Right lobe of liver (tissue), 6 donors: ENCODE measurements at regions of chr2 and their contacts with region 1.

Region 1: GRCh38 chr2:27779417-27780055 is 8.0 kb downstream of the MRPL33 start:
- DNase-seq: no peak
- ATAC-seq: peak; percentile 22 to 54 (median 26)
- H3K4me3 ChIP-seq: no peak overlapping the region
- H3K27ac ChIP-seq: peak overlapping the region in 1 of 3 donors; percentile 41
- H3K4me1 ChIP-seq: peaks cover 0 to 8% (median 0%) of the 10 kb centered on the region in 4 donors
- H3K27me3 ChIP-seq: no peaks in the 10 kb centered on the region
- CTCF ChIP-seq: no peak
- POLR2A ChIP-seq: no peak

Region 2: DNA sequence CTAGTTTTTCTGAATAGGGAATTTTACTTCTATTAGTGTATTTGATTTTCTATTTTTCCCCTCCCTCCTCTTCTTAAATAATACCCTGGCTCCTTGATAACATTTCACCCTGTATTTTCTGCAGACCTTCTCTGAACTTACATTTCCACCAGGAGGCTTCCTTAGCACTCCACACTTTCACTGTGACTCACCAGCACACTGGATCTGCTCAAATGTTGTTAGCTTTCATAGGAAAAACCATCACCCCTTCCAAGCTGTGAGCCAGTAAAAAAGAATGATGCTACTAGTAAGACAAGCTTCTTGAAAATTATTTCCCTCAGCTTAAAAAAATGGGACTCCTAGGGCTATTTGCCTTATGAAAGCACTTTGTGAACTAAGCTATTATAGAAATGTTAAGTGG is 132.2 kb before region 1 on chr2:
- intact Hi-C with region 1: no loop called
- DNase-seq: no peak
- ATAC-seq: no peak
- H3K4me3 ChIP-seq: no peak overlapping the region
- H3K27ac ChIP-seq: no peak overlapping the region
- H3K4me1 ChIP-seq: no peaks in the 10 kb centered on the region
- H3K27me3 ChIP-seq: no peaks in the 10 kb centered on the region
- CTCF ChIP-seq: no peak
- POLR2A ChIP-seq: no peak

Region 3: DNA sequence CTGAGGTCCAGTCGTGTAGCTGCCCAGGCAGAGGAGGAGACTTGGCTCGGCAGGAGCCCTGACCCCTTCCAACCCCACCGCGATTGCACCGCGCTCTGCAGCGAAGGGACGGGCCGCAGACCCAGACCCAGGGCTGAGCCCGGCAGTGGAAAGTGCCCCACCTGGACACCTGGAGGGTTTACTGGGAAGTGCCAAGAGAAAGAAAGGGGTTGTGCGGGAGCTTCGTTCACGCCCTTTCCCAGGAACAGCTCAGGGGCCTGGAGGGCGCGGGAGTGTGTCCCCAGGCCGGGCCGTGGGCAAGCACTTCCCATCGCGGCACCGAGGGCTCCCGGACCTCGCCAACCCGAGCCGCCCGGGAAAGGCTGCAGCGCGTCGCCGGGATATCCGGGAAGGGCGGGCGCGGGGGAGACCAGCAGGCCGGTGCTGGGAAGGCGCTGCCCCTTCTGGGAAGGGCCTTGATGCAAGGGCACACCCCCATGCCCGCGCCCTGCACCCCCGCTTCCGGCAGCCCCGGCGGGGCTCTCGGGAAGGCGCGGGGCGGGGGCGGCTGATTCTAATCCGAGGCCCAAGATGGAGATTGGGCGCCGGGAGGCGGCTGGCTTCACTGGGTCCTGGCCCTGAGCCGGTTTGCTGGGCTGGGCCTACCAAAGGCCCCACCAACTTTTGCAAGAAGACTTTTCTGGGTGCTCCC is 44.1 kb before region 1 on chr2:
- intact Hi-C with region 1: no loop called
- DNase-seq: peak; percentile 73 to 88 (median 84)
- ATAC-seq: peak; percentile 52 to 78 (median 68)
- H3K4me3 ChIP-seq: peak overlapping the region; percentile 27 to 57 (median 49)
- H3K27ac ChIP-seq: peak overlapping the region; percentile 88 to 98 (median 93)
- H3K4me1 ChIP-seq: peaks cover 2 to 47% (median 14%) of the 10 kb centered on the region in 4 donors
- H3K27me3 ChIP-seq: no peaks in the 10 kb centered on the region
- CTCF ChIP-seq: no peak
- POLR2A ChIP-seq: peak; percentile 88

Region 4: DNA sequence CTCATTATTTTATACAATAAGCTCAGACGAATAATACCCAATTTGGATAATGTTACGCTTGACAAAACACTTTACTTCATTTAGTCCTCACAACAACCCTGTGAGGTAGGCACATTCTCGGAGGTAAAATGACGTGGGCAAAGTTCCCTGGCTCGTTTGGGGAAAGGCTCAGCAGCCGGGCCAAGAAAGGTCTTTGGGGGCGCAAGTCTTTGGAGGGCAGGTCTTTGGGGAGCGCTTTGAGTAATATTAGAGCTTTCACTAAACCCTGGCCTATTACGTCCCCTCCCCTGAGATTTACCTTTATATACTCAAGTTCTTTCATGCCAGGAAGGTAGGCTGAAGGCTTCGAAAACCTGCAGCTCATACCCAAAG is 110.2 kb after region 1 on chr2:
- intact Hi-C with region 1: loop called in 1 of 2 experiments (anchors 10 kb)
- DNase-seq: peak in 2 of 3 donors; percentile 39 to 56
- ATAC-seq: peak; percentile 2 to 21 (median 13)
- H3K4me3 ChIP-seq: peak overlapping the region; percentile 71 to 84 (median 83)
- H3K27ac ChIP-seq: peak overlapping the region; percentile 96 to 98 (median 97)
- H3K4me1 ChIP-seq: peaks cover 0 to 13% (median 4%) of the 10 kb centered on the region in 4 donors
- H3K27me3 ChIP-seq: no peaks in the 10 kb centered on the region
- CTCF ChIP-seq: no peak
- POLR2A ChIP-seq: no peak

Region 5: GRCh38 chr2:27932396-27932795 is 152.9 kb after region 1 on chr2:
- intact Hi-C with region 1: no loop called
- DNase-seq: no peak
- ATAC-seq: peak in 1 of 4 donors; percentile 68
- H3K4me3 ChIP-seq: no peak overlapping the region
- H3K27ac ChIP-seq: no peak overlapping the region
- H3K4me1 ChIP-seq: no peaks in the 10 kb centered on the region
- H3K27me3 ChIP-seq: no peaks in the 10 kb centered on the region
- CTCF ChIP-seq: no peak
- POLR2A ChIP-seq: no peak